IMR-90 (cell line): ENCODE measurements at regions of chr9 and their contacts with region 1.

Region 1: DNA sequence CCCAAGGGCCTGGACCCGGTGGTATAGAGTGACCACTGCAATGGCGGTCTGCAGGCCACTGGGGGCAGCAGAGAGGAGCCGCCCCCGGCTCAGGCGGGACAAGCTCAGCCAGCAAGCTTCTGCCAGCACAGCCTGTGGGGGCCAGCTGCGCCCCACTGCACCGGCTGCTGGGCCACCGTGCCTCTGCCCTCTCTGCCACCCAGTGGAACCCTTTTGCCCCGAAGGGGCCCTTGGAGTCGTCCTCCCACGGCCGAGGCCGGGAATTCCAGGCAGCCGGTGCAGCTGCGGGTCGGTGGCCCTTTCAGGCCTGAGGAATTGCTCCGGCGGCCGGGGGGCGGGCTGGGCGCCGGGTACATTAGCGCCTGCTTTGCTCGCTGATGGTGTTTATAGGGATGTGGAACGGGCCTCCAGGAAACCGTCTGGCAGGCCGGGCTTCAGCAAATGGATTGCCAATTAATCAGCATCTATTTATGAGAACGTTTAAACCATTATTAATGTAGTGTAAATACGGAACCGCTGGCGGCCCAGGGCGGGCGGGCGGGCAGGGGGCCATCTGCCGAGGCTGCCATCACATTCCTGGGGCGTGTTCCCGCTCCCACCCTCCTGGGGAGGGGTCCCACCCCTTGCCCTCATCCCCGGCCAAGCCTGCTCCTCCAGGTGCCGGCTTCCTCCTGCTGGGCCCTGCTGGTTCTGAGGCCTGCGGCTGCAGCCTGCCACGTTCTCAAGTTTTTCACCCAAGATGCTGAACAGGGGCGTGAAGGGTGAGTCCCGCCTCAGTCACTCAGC is 127.4 kb downstream of the BARX1 start:
- DNase-seq: peak; percentile 28
- ATAC-seq: peak; percentile 100
- H3K4me3 ChIP-seq: peak overlapping the region; percentile 19; the same call in 1 of the 2 replicates
- H3K27ac ChIP-seq: no peak overlapping the region
- H3K4me1 ChIP-seq: no peaks in the 10 kb centered on the region
- H3K27me3 ChIP-seq: peaks cover 9% of the 10 kb centered on the region; the same call in 1 of the 2 replicates
- CTCF ChIP-seq: peak; percentile 69
- POLR2A ChIP-seq: no peak
- RAD21 ChIP-seq: peak; percentile 46

Region 2: DNA sequence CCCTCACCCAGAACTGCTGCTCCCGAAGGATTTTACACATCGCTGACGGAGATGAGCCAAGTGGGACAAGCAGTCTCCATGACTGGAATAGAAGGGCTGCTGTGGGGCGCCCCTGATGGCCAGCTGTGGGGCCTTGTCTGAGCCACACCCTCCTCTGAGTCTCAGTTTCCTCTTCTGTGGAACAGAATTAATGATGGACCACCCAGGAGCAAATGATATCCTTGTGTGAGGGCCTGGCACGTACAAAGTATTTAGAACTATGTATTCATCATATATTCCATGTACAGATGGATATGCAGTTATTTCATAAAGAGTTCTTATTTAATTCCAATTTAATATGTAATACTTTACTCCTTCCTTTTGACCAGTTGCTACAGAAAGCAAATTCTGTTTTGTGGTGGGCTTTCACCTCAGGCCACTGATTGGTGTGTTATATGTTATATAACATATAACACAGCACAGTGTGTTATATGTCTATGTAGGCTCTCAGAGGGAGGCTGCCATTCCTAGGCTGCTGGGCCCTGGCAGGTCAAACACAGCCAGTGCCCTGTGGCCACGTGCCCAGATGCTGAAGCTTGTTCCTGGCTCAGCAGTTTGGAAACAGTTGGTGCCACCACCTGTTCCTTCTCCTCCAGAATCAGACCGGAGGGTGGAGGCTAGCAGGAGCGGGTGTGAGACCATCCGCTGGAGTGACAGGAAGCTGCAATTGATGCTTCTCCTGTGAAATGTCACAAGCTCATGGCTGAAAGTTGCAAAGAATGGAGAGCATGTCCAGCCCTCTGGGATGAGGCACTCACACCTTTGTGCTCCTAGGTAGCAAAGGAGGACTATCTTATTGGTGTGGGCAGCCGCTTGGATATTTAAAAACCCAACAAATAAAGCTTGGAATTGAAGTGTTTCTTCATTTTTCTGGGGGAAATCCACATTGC is 884.8 kb before region 1 on chr9:
- CTCF ChIA-PET with region 1: no interaction called
- POLR2A ChIA-PET with region 1: no interaction called
- dilution Hi-C with region 1: no loop called
- in situ Hi-C with region 1: no loop called
- intact Hi-C with region 1: no loop called
- DNase-seq: no peak
- ATAC-seq: no peak
- H3K4me3 ChIP-seq: no peak overlapping the region
- H3K27ac ChIP-seq: no peak overlapping the region
- H3K4me1 ChIP-seq: no peaks in the 10 kb centered on the region
- H3K27me3 ChIP-seq: peaks cover 16% of the 10 kb centered on the region
- CTCF ChIP-seq: no peak
- POLR2A ChIP-seq: no peak
- RAD21 ChIP-seq: no peak

Region 3: DNA sequence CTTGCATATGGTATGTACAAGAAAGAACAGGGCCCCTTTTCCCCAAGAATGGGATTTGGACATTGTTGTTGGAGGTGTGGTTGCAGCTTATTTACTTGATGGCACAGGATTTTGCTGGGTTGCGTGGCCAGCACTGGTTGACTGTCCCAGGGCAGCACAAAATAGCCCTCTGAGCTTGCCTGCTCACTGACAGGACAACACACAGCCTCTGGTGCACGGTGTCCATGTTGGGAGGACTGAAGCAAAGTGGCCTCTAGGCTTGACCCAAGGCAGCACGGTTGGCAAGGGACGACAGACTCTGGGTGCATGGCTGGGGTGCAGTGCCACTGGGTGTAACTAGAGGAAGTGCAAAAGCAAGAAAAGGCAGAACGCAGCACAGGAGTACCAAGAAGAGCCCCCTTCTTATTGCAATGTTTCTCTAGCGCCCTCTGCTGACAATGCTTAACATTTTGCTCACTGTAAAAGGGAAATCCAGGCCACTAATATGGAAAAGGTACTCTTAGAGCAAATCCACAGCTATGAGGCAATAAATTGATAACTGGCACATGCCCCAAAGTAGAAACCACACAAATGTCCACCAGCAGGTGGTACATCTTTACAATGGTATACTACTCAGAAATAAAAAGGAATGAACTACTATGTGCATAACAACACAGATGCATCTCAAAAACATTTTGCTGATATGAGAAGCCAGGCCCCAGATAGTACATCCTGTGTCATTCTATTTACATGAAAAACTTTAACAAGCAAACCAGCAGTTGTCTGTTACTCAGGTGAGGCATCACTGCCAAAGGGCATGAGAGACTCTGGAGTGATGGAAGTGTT is 174.8 kb after region 1 on chr9:
- CTCF ChIA-PET with region 1: no interaction called
- POLR2A ChIA-PET with region 1: no interaction called
- dilution Hi-C with region 1: no loop called
- in situ Hi-C with region 1: no loop called
- intact Hi-C with region 1: loop called (anchors 5 kb)
- DNase-seq: peak; percentile 50
- ATAC-seq: peak; percentile 75
- H3K4me3 ChIP-seq: no peak overlapping the region
- H3K27ac ChIP-seq: no peak overlapping the region
- H3K4me1 ChIP-seq: no peaks in the 10 kb centered on the region
- H3K27me3 ChIP-seq: 0 out of 2 replicates have a peak, but pooled peaks cover 1% of the 10 kb centered on the region
- CTCF ChIP-seq: peak; percentile 61
- POLR2A ChIP-seq: no peak
- RAD21 ChIP-seq: peak; percentile 46